HCT116 (cell line): ENCODE measurements at regions of chr16 and their contacts with region 1.

Region 1: GRCh38 chr16:53054670-53055485 is at the start of gene CHD9:
- DNase-seq: peak; percentile 72
- ATAC-seq: peak; percentile 79
- H3K4me3 ChIP-seq: peak within 1 kb of the TSS; percentile 79 to 87
- H3K27ac ChIP-seq: peak within 1 kb of the TSS; percentile 74
- H3K4me1 ChIP-seq: peaks cover 13 to 45% of the 10 kb centered on the region in 2 experiments
- H3K27me3 ChIP-seq: no peaks in the 10 kb centered on the region
- CTCF ChIP-seq: peak; percentile 91 to 98 (median 92)
- POLR2A ChIP-seq: peak; percentile 65
- RAD21 ChIP-seq: peak; percentile 96
- total RNA-seq, gene CHD9: 18.9 TPM

Region 2: GRCh38 chr16:53099318-53100130 is 44.6 kb after region 1 on chr16:
- CTCF ChIA-PET with region 1: interaction called, 5 read pairs
- POLR2A ChIA-PET with region 1: no interaction called
- RAD21 ChIA-PET with region 1: no interaction called
- intact Hi-C with region 1: loop called (anchors 2 kb)
- DNase-seq: peak; percentile 78
- ATAC-seq: peak; percentile 96
- H3K4me3 ChIP-seq: peak overlapping the region; percentile 41 to 56
- H3K27ac ChIP-seq: peak overlapping the region; percentile 83
- H3K4me1 ChIP-seq: peaks cover 26 to 33% of the 10 kb centered on the region in 2 experiments
- H3K27me3 ChIP-seq: no peaks in the 10 kb centered on the region
- CTCF ChIP-seq: no peak
- POLR2A ChIP-seq: no peak
- RAD21 ChIP-seq: no peak

Region 3: DNA sequence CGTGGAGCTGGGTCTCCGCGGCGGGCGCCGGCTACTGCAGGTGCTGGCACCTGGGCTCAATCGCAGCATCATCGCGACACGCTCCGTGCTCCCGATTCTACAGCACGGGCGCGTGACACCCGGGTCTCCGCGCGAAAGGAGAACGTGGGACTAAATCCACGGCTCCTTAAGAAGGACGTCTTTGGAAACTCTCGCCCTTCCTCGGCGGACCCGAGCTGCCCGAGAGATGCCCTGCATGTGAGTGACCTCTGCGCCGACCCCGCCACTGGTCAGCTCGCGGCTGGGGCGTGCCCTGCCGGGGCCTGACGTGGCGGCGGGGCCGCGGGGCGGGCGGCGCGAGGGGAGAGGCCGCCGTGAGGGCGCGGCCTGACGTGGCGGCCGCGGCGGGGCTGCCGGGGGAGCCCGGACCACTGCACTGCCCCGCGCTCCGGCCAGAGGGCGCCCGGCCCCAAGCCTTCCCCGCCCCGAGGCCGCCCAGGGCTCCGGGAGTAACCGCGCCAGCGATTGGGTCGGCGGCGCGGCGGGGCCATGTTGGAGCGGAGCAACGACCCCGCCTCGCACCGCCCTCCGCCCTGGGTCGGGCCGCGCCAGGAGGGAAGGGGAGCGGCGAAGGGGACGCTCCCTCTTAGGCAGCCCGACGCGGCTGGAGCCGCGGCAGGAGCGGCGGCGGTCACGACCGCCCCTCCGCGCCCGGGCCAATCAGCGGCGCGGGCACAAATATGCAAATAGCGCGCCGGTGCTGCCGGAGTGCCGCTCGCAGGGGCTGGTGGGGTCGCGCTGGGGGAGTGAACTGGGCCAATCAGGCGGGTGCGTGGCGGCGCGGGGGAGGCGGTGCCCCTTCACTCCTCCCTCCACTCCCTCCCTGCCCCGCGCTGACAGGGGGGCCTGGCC is 75.5 kb after region 1 on chr16:
- CTCF ChIA-PET with region 1: interaction called, 3 read pairs
- POLR2A ChIA-PET with region 1: no interaction called
- RAD21 ChIA-PET with region 1: no interaction called
- intact Hi-C with region 1: loop called (anchors 2 kb)
- DNase-seq: peak; percentile 78
- ATAC-seq: peak; percentile 90
- H3K4me3 ChIP-seq: peak overlapping the region; percentile 40 to 65
- H3K27ac ChIP-seq: peak overlapping the region; percentile 87; the same call in 1 of the 2 replicates
- H3K4me1 ChIP-seq: peaks cover 2 to 6% of the 10 kb centered on the region in 2 experiments
- H3K27me3 ChIP-seq: no peaks in the 10 kb centered on the region
- CTCF ChIP-seq: peak; percentile 9 to 58 (median 25); a peak in 3 of 6 replicates
- POLR2A ChIP-seq: no peak
- RAD21 ChIP-seq: peak; percentile 59

Region 4: DNA sequence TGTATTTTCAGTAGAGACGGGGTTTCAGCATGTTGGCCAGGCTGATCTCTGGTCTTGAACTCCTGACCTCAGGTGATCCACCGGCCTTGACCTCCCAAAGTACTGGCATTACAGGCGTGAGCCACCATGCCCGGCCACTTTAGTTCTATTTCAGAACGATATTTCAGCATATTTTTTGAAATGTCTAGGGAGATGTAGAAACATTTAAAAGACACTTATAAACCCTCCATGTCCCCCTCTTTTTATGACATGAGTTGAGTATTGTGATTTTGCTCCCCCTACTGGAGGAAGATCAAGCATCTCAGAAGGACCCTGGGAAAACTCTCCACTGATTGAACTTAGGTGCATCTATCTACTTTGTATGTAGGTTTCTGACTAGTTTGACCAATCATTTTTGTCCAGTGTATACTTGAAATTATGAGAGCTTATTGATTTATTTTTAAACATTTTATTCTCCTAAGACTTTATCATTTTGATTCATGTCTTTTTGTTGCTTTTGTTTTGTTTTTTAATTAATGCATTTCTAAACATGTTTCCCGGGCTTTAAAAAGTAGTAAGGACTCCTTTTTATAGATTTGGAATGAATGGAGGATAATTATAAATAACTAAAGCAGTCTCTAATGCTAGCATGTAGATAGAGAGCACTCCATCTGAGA is 105.0 kb after region 1 on chr16:
- CTCF ChIA-PET with region 1: interaction called, 4 read pairs
- POLR2A ChIA-PET with region 1: no interaction called
- RAD21 ChIA-PET with region 1: no interaction called
- intact Hi-C with region 1: loop called (anchors 2 kb)
- DNase-seq: peak; percentile 26
- ATAC-seq: peak; percentile 75
- H3K4me3 ChIP-seq: no peak overlapping the region
- H3K27ac ChIP-seq: no peak overlapping the region
- H3K4me1 ChIP-seq: no peaks in the 10 kb centered on the region
- H3K27me3 ChIP-seq: no peaks in the 10 kb centered on the region
- CTCF ChIP-seq: peak; percentile 47 to 75 (median 69); a peak in 5 of 6 replicates
- POLR2A ChIP-seq: no peak
- RAD21 ChIP-seq: peak; percentile 59

Region 5: DNA sequence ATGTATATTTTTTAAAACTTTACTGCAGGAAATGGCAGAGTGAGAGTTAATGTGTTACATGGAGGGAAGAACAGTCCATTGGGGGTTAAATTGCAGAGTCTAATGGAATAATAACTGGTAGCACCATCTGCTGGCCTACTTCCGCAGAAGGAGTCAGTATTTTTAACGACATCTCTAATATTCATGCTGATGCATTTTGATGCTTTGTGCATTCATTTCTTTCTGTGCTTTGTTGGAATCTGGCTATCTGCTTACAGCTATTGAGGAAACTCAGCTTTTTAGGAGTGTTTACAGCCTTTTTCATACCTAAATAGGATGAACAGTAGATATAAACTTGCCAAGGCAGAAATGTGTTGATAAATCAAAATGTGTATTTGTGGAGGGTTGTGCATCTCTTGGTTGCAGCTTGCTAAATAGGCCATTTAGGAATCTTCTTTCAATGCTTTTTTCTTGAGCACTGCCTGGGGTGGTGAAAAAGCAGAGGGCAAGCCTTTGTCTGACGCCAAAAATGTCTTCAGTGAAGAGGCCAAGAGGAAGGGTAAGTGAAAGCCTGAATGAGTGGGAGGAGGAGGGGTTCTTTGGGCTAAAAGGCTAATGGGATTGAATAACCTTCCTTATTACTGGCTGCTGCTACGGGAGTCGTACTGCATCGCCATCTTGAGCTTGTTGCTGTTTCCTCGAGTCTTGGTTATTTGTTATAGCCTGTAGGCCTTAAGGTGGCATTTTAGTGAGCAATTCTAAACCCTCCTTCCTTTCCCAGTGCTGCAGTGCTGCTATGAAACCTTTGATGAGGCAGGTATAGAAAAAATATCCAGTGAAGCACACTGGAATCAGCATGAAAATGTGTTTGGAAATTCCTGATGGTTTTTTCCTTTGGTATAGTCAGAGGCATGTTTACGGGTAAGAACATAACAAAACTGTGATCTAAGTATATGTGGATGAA is 153.2 kb after region 1 on chr16:
- CTCF ChIA-PET with region 1: interaction called, 12 read pairs
- POLR2A ChIA-PET with region 1: no interaction called
- RAD21 ChIA-PET with region 1: interaction called in 1 of 2 experiments, 4 read pairs
- intact Hi-C with region 1: loop called (anchors 2 kb)
- DNase-seq: peak; percentile 19
- ATAC-seq: peak; percentile 80
- H3K4me3 ChIP-seq: no peak overlapping the region
- H3K27ac ChIP-seq: no peak overlapping the region
- H3K4me1 ChIP-seq: peaks cover 0 to 7% of the 10 kb centered on the region in 2 experiments; a peak in 1 of 4 replicates
- H3K27me3 ChIP-seq: no peaks in the 10 kb centered on the region
- CTCF ChIP-seq: peak; percentile 41 to 58 (median 45); a peak in 4 of 6 replicates
- POLR2A ChIP-seq: peak; percentile 51
- RAD21 ChIP-seq: peak; percentile 54

Region 6: DNA sequence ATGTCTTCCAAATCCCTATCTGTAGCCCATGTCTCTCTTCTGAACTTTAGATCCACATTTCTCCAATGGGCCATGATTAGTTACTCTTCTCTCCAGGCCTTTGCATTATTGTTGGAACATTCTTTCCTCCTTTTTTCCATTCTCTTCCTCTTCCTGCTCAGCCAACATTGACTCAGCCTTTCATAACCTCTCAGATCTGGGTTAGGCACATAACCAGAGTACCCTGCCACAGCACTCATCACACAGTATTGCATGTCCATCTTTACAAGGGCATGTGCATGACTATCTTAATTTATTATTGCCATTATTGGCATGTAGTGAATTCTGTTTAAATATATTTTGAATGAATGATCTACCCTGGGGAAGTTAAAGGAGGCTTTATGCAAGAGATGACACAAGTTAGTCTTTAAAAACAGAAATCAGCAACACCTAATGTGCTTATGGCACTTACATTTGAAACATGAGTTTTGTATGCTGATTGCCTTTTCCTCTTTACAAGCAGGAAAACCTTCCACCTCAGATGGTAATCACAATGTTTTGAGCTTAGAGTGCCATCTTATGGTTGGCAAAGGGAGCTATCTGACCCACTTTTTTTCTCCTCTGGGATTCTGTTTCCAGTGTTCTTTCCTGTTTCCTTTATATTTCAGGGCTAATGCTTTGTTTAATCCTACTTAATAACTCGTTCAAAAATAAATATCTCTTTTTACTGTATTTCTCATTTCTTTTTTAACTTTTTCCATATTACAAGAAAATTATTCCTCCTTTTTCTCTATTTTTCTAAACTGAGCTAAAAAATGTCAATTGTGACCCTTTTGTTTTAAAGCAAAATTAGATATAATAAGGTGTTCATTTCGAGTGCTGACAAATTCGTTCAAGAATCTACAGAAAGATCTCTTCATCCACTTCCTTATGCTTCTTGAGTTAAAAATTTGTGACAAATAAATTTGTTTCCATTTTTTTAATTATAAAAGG is 228.4 kb after region 1 on chr16:
- CTCF ChIA-PET with region 1: interaction called, 24 read pairs
- POLR2A ChIA-PET with region 1: interaction called, 3 read pairs
- RAD21 ChIA-PET with region 1: interaction called, 3 to 6 read pairs
- intact Hi-C with region 1: loop called (anchors 1 kb)
- DNase-seq: peak; percentile 46
- ATAC-seq: peak; percentile 70
- H3K4me3 ChIP-seq: no peak overlapping the region
- H3K27ac ChIP-seq: no peak overlapping the region
- H3K4me1 ChIP-seq: no peaks in the 10 kb centered on the region
- H3K27me3 ChIP-seq: no peaks in the 10 kb centered on the region
- CTCF ChIP-seq: peak; percentile 59 to 71 (median 68); a peak in 5 of 6 replicates
- POLR2A ChIP-seq: no peak
- RAD21 ChIP-seq: peak; percentile 79

Region 7: GRCh38 chr16:53503270-53503923 is 448.5 kb after region 1 on chr16:
- CTCF ChIA-PET with region 1: no interaction called
- POLR2A ChIA-PET with region 1: no interaction called
- RAD21 ChIA-PET with region 1: no interaction called
- intact Hi-C with region 1: loop called (anchors 5 kb)
- DNase-seq: peak; percentile 100
- ATAC-seq: peak; percentile 94
- H3K4me3 ChIP-seq: peak overlapping the region; percentile 72 to 79
- H3K27ac ChIP-seq: peak overlapping the region; percentile 70
- H3K4me1 ChIP-seq: peaks cover 15 to 24% of the 10 kb centered on the region in 2 experiments; a peak in 3 of 4 replicates
- H3K27me3 ChIP-seq: no peaks in the 10 kb centered on the region
- CTCF ChIP-seq: no peak
- POLR2A ChIP-seq: no peak
- RAD21 ChIP-seq: no peak